ENCODE measurements at regions of chr1 and their contacts with region 1.

Region 1: GRCh38 chr1:151399890-151400495 is 620 bp downstream of the PSMB4 start:
- DNase-seq: peak in 1 of 5 donors; percentile 31
- ATAC-seq: peak in 3 of 4 donors; percentile 19 to 29 (median 23)
- H3K4me3 ChIP-seq: peak overlapping the region; percentile 33 to 100 (median 82)
- H3K27ac ChIP-seq: peak overlapping the region; percentile 64 to 94 (median 86)
- H3K4me1 ChIP-seq: peaks cover 3 to 20% (median 14%) of the 10 kb centered on the region in 12 donors
- H3K27me3 ChIP-seq: no peaks in the 10 kb centered on the region
- CTCF ChIP-seq: no peak
- POLR2A ChIP-seq: no peak

Region 2: GRCh38 chr1:151198255-151199127 is 201.5 kb before region 1 on chr1 and contains the start of gene PIP5K1A:
- intact Hi-C with region 1: loop called in 1 of 10 experiments (anchors 10 kb)
- DNase-seq: peak; percentile 99 to 100 (median 99)
- ATAC-seq: peak; percentile 94 to 97 (median 96)
- H3K4me3 ChIP-seq: peak within 1 kb of the TSS; percentile 58 to 90 (median 78)
- H3K27ac ChIP-seq: peak within 1 kb of the TSS; percentile 33 to 94 (median 90)
- H3K4me1 ChIP-seq: peaks cover 0 to 49% (median 36%) of the 10 kb centered on the region in 12 donors
- H3K27me3 ChIP-seq: no peaks in the 10 kb centered on the region
- CTCF ChIP-seq: no peak
- POLR2A ChIP-seq: peak in 1 of 2 donors; percentile 68
- total RNA-seq, gene PIP5K1A: 28.1 to 48.8 (median 37.0) TPM

Region 3: DNA sequence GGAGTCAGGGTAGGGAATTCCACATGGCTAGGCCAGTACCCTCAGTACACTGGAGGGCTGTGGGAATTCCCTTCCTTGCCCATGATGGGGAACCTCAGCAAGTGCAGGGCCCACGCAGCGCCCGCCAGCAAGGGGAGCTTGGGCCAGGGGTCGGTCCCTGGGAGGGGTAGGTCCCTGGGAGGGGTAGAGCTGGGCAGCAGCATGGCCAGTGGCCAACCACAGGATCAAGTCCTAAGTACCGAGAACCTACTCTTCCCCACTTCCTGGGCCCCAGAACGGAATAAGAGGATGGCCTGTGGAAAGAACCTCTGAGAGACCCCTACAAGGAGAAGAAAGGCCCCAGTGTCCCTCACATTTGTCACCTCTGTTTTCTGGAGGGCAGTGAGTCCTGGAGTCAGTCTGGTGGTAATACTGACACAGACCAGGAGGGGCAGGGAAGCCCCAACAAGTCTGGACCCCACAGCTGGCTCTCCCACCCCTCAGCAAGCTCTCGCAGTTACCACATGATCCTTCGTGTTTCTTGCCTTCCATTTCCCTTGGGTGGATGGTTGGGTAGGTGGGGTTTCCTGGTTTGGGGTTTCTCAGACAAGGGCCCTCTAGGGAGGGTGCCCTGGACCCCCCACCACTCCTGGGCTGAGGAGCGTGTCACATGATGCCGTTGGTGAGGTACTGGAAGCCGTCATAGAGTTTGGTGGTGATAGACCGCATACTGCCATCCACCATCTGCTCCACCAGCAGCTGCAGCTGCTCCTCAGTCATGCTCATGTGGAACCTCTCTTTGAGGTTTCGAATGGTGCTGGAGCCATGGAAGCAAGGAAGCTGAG is 107.6 kb before region 1 on chr1:
- intact Hi-C with region 1: loop called in 1 of 10 experiments (anchors 10 kb)
- DNase-seq: no peak
- ATAC-seq: peak in 1 of 4 donors; percentile 9
- H3K4me3 ChIP-seq: no peak overlapping the region
- H3K27ac ChIP-seq: no peak overlapping the region
- H3K4me1 ChIP-seq: peaks cover 0 to 11% (median 0%) of the 10 kb centered on the region in 12 donors
- H3K27me3 ChIP-seq: no peaks in the 10 kb centered on the region
- CTCF ChIP-seq: no peak
- POLR2A ChIP-seq: no peak

Region 4: GRCh38 chr1:151327223-151327902 is 72.6 kb before region 1 on chr1 and contains the start of gene PI4KB:
- intact Hi-C with region 1: loop called in 2 of 10 experiments (anchors 2 to 5 kb)
- DNase-seq: peak; percentile 85 to 93 (median 91)
- ATAC-seq: peak; percentile 97 to 98 (median 98)
- H3K4me3 ChIP-seq: peak within 1 kb of the TSS; percentile 70 to 95 (median 86)
- H3K27ac ChIP-seq: peak within 1 kb of the TSS; percentile 82 to 99 (median 96)
- H3K4me1 ChIP-seq: peaks cover 0 to 41% (median 24%) of the 10 kb centered on the region in 12 donors
- H3K27me3 ChIP-seq: no peaks in the 10 kb centered on the region
- CTCF ChIP-seq: no peak
- POLR2A ChIP-seq: peak in 1 of 2 donors; percentile 85
- total RNA-seq, gene PI4KB: 34.9 to 76.0 (median 49.8) TPM

Region 5: DNA sequence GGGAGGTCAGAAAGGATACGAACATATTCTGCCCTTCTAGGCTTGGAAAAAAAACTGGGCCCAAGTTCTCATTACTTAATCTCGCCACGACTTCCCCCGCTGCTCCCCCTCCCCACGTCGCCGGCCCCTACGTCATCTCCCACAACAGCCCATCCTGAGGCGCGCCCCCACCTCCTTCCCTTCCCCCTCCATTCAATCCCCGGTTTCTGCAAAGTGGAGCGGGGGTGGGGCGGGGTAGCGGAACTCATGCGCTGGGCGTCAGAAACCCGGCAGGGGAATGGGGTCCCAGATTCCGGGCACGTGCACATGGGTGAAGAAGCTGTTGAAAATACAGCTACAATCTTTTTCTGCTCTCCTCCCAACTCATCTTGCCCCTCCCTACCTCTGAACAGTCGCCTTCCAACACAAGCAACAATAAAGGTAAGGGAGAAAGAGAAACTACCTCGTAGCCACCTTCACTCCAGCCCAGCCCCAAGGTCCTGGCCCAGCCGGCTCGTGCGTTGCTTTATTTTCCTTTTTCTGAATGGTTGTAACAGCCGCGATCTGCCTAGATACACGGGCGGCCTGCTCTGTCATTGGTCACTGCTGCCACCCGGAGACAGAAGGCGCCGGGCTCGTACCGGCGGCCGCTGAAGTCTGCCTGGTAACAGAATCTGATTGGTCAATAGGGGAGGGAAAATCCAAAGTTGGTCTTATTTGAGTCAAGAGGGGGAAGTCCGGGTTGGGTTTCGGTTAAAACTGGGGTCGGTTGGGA is 53.0 kb before region 1 on chr1 and contains the start of gene RFX5:
- intact Hi-C with region 1: loop called in 7 of 10 experiments (anchors 2 to 5 kb)
- DNase-seq: peak; percentile 94 to 96 (median 95)
- ATAC-seq: peak; percentile 98 to 99 (median 99)
- H3K4me3 ChIP-seq: peak within 1 kb of the TSS; percentile 55 to 95 (median 76)
- H3K27ac ChIP-seq: peak within 1 kb of the TSS; percentile 79 to 96 (median 90)
- H3K4me1 ChIP-seq: peaks cover 0 to 26% (median 9%) of the 10 kb centered on the region in 12 donors
- H3K27me3 ChIP-seq: no peaks in the 10 kb centered on the region
- CTCF ChIP-seq: peak in 1 of 12 donors; percentile 16
- POLR2A ChIP-seq: peak in 1 of 2 donors; percentile 63
- total RNA-seq, gene RFX5: 14.0 to 49.3 (median 22.1) TPM

Region 6: GRCh38 chr1:151384584-151384983 is 15.4 kb before region 1 on chr1:
- intact Hi-C with region 1: no loop called
- DNase-seq: no peak
- ATAC-seq: no peak
- H3K4me3 ChIP-seq: no peak overlapping the region
- H3K27ac ChIP-seq: no peak overlapping the region
- H3K4me1 ChIP-seq: no peaks in the 10 kb centered on the region
- H3K27me3 ChIP-seq: no peaks in the 10 kb centered on the region
- CTCF ChIP-seq: no peak
- POLR2A ChIP-seq: no peak